Activated CD8-positive, alpha-beta memory T cell treated with anti-CD3 and anti-CD28 coated beads, Interleukin-2, amount 10 ng/mL, durations not matched to agents 7 days and 5 days (primary cell): ENCODE measurements at regions of chr2 and their contacts with region 1.

Region 1: DNA sequence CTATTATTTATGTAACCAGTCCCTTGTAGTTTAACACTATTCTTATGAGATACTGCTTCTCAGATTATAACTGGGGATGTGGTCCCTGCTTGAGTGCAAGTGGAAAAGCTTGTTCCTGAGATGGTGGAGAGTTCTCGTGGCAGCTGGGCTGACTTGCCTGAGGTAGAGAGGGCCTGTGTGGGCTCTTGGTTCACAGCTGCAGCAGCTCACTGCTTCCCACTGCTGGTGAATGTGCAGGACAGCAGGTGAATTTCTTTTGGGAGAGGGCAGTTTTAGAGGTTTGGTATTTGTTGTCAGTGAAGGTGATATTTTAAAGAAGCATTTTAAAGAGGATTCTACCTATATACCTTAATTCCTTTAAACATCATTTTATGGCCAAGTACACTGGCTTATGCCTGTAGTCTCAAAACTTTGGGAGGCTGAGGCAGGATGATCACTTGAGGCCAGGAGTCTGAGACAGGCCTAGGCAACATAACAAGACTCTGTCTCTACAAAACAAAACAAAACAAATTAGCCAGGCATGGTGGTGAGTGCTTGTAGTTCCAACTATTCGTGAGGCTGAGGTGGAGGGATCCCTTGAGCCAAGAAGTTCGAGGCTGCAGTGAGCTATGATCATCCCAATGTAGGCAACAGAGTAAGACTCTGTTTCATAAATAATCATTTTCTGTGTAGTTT is 94.8 kb downstream of the MTA3 start:
- DNase-seq: peak; percentile 67
- ATAC-seq: peak; percentile 94
- H3K4me3 Mint-ChIP-seq: no peak overlapping the region
- H3K27ac Mint-ChIP-seq: no peak overlapping the region
- H3K4me1 Mint-ChIP-seq: no peaks in the 10 kb centered on the region
- H3K27me3 Mint-ChIP-seq: no peaks in the 10 kb centered on the region

Region 2: GRCh38 chr2:42424033-42424432 is 239.2 kb before region 1 on chr2:
- CTCF ChIA-PET with region 1: no interaction called
- DNase-seq: no peak
- ATAC-seq: no peak
- H3K4me3 Mint-ChIP-seq: no peak overlapping the region
- H3K27ac Mint-ChIP-seq: no peak overlapping the region
- H3K4me1 Mint-ChIP-seq: peaks cover 12% of the 10 kb centered on the region
- H3K27me3 Mint-ChIP-seq: peaks cover 18% of the 10 kb centered on the region

Region 3: DNA sequence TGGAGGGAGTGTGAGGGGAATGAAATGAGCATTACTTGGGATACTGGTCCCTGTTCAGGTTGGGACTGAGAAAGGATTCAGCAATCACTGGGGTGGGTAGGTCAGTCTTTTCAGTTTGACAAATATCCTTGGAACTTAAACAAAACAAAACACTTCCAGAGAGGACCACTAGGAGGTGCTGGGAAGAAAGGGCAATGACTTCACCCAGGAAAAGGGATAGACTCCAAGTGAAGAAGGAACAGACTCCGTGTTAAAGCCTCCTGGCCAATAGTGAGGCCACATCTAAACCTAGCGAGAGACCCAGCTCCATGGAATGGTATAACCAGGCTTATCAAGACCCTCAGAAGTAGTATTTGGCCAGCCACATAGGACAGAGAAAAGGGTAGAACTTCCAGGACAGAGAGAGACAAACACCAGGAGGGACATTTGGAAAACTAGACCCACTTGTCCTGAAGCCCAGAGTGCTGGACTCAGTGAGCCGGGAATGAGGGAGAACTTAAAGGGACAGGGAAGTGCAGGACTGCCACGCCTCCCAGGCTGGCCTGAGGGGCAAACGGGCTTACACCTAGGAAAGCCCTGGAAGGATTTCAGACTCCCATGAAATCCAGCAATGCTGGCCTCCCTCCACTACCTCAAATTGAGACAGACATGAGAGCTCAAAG is 149.9 kb before region 1 on chr2:
- CTCF ChIA-PET with region 1: interaction called, 20 read pairs
- DNase-seq: no peak
- ATAC-seq: no peak
- H3K4me3 Mint-ChIP-seq: no peak overlapping the region
- H3K27ac Mint-ChIP-seq: no peak overlapping the region
- H3K4me1 Mint-ChIP-seq: peaks cover 8% of the 10 kb centered on the region
- H3K27me3 Mint-ChIP-seq: peaks cover 3% of the 10 kb centered on the region

Region 4: DNA sequence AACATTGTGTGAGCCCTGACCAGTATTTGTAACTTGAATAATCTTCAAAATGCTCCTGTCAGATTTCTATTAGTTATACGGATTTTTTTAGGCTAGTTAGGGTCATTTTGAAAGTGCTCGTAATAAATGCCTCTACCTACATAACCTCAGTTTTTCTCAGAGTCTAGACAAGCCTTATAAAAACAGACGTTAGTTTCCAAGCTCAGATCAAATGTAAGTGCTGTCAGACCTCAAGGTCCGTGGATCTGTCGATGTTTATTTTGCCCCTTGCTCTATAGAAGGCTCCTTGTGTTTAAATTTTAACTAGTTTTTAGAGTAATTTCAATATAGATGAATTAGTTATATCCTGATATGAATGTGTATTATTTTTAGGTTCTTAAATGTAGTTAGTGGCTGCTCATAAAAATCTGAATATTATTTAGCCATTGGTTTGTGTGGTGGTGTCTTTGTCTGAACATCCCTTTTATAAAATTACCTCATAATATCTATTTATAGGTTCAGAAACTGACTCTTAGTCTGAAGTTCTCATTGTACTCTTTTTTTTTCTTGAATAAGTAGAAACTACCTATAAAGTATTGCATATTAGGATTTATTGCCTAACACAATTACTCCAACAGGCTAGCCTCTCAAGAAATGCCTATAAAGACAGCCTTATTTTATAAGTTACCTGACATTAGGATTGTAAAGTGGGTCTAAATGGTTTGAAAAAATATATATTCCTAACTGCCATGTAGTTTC is 23.7 kb before region 1 on chr2:
- CTCF ChIA-PET with region 1: interaction called, 15 read pairs
- DNase-seq: no peak
- ATAC-seq: no peak
- H3K4me3 Mint-ChIP-seq: no peak overlapping the region
- H3K27ac Mint-ChIP-seq: no peak overlapping the region
- H3K4me1 Mint-ChIP-seq: no peaks in the 10 kb centered on the region
- H3K27me3 Mint-ChIP-seq: no peaks in the 10 kb centered on the region

Region 5: DNA sequence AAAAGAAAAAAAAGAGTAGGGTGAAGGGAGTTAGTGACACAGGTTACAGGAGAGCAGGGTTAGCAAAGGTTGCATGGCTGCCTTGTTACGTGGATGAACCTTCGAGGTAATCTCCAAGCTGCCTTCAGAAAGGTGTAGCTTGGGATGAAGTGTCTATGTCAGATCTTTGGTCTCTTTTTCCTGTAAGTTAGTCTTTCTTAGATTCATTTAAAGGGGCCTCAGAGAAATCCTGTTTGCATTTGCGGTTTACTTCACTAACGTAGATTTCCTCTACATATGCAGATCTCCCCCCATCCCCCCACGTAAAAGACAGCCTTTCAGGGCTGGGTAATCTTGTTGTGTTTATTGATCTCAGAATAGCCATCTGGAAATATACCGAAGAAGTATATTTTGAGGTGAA is 11.2 kb before region 1 on chr2:
- CTCF ChIA-PET with region 1: interaction called, 11 read pairs
- DNase-seq: peak; percentile 43
- ATAC-seq: peak; percentile 45
- H3K4me3 Mint-ChIP-seq: peak overlapping the region; percentile 31
- H3K27ac Mint-ChIP-seq: peak overlapping the region; percentile 50
- H3K4me1 Mint-ChIP-seq: peaks cover 31% of the 10 kb centered on the region
- H3K27me3 Mint-ChIP-seq: no peaks in the 10 kb centered on the region

Region 6: GRCh38 chr2:42764096-42764495 is 100.9 kb after region 1 on chr2 and contains the start of gene OXER1:
- CTCF ChIA-PET with region 1: no interaction called
- DNase-seq: no peak
- ATAC-seq: no peak
- H3K4me3 Mint-ChIP-seq: no peak within 1 kb of the TSS
- H3K27ac Mint-ChIP-seq: no peak within 1 kb of the TSS
- H3K4me1 Mint-ChIP-seq: no peaks in the 10 kb centered on the region
- H3K27me3 Mint-ChIP-seq: no peaks in the 10 kb centered on the region
- total RNA-seq, gene OXER1: 0.21 TPM in 1 of 2 experiments, not detected in the other

Region 7: GRCh38 chr2:43239981-43240761 is 576.9 kb after region 1 on chr2:
- CTCF ChIA-PET with region 1: no interaction called
- DNase-seq: no peak
- ATAC-seq: no peak
- H3K4me3 Mint-ChIP-seq: no peak overlapping the region
- H3K27ac Mint-ChIP-seq: no peak overlapping the region
- H3K4me1 Mint-ChIP-seq: peaks cover 6% of the 10 kb centered on the region
- H3K27me3 Mint-ChIP-seq: no peaks in the 10 kb centered on the region